Transverse colon (tissue), 4 donors: ENCODE measurements at regions of chr3 and their contacts with region 1.

Region 1: DNA sequence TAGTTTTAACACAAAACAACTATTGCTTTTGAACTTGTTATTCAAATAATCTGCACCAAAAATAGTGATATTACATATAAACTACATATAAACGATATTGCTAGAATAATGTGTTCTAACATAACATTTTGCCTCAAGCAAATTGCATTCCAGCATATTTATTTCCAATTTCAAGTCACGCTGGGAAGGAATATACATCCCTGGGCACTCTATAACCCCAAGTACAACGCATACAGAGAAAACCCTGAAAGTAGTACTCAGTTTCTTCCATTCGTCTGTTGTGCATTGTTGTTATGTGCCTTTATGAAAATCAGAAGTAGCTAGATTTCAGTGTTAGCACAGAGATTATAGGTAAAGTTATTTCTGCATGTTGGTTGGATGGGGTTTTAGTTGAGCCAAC is 251.5 kb downstream of the TUSC7 start:
- DNase-seq: no peak
- H3K4me3 ChIP-seq: no peak overlapping the region
- H3K27ac ChIP-seq: no peak overlapping the region
- H3K4me1 ChIP-seq: no peaks in the 10 kb centered on the region
- H3K27me3 ChIP-seq: no peaks in the 10 kb centered on the region
- CTCF ChIP-seq: no peak
- EP300 ChIP-seq: no peak
- POLR2A ChIP-seq: no peak

Region 2: GRCh38 chr3:116914004-116914403 is 47.1 kb before region 1 on chr3:
- in situ Hi-C with region 1: no loop called
- intact Hi-C with region 1: loop called (anchors 1 kb)
- DNase-seq: no peak
- H3K4me3 ChIP-seq: no peak overlapping the region
- H3K27ac ChIP-seq: no peak overlapping the region
- H3K4me1 ChIP-seq: no peaks in the 10 kb centered on the region
- H3K27me3 ChIP-seq: no peaks in the 10 kb centered on the region
- CTCF ChIP-seq: no peak
- EP300 ChIP-seq: no peak
- POLR2A ChIP-seq: no peak